Left cardiac atrium (tissue), 4 donors: ENCODE measurements at regions of chr17 and their contacts with region 1.

Region 1: DNA sequence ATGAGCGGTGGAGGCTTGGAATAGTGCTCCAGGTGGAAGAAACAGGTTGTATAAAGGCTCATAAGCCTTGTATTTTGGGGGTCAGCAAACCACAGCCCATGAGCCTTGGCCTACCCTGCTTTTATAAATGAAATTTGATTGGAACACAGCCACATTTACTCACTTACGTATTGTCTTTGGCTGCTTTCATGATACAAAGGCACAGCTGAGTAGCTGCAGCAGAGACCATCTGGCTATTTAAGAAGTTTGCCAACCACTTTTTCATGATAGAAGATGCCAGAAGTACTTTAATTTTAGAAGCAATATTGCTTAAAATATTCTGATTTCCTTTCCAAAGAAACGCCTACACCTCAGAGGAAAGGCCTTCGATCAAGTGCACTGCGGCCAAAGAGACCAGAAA is 73.8 kb downstream of the C17orf58 start:
- DNase-seq: no peak
- ATAC-seq: peak; percentile 23 to 51

Region 2: GRCh38 chr17:67725373-67725791 is 197.1 kb before region 1 on chr17:
- intact Hi-C with region 1: loop called in 1 of 2 experiments (anchors 10 kb)
- DNase-seq: no peak
- ATAC-seq: no peak

Region 3: GRCh38 chr17:67836205-67836987 is 86.1 kb before region 1 on chr17:
- intact Hi-C with region 1: no loop called
- DNase-seq: no peak
- ATAC-seq: no peak